ENCODE measurements at regions of chr15 and their contacts with region 1.

Region 1: DNA sequence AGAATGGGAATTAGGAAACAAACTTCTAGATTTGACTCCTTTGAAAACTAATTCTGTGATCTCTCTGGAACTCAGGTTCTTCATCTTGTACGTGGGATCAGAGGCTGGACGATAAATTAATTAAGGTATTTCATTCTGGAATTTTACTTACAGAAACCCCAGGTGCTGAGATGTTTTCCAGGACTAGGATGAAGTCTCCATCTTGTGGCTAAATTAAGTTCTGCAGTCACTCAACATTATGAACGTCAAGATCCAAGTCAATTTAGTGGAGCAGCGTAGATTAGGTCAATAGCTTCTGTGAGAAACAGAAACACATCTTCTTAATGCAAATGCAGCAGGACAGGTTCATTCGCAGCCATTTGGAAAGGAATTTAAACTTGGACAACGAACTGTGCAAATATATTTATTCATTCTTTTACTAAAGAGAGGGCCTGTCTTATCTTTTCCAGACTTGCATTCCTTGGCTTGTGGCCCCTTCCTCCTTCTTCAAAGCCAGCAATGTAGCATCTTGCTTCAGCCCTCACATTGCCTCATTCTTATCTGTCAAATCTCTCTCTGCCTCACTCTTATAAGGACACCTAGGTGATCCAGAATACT is 26.7 kb upstream of the TMC3 start:
- DNase-seq: peak; percentile 43
- CTCF ChIP-seq: peak; percentile 67

Region 2: DNA sequence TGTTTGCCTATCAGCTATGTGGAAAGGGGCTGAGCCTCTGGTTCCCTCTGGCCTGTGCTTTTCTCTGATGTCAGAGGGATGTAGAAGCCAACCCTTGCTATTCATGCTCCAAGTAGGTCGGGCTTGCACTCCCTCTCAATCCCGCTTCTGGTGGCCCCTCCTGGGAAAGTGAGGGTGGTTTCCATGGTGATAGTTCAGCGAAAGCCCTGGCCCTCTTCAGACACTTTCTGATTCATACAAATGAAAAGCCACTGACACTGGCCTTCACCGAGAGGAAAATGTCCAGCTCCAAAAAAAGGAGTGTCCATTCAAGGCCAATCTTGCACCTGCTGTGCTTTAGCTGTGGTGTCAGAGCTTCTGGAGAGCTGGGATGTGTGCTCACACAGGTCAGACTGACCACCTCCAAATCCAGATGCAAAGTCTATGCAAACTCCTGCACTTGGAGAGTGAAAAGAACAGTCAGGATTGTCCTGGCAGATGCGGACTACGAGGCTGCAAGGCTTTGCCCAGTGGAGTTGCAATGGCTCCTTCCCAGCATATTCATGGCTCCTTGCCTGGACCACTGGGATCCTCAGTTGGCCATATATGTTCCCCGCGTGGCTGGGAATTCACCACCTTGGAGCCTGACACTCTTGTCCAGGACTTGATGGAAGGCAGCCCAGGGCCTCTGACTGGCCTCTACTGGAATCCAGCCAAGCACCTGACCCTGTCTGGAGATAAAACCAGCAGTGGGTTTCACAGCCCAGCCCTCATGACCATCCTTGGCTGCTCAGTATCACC is 525.0 kb before region 1 on chr15:
- in situ Hi-C with region 1: no loop called
- DNase-seq: no peak
- CTCF ChIP-seq: no peak

Region 3: DNA sequence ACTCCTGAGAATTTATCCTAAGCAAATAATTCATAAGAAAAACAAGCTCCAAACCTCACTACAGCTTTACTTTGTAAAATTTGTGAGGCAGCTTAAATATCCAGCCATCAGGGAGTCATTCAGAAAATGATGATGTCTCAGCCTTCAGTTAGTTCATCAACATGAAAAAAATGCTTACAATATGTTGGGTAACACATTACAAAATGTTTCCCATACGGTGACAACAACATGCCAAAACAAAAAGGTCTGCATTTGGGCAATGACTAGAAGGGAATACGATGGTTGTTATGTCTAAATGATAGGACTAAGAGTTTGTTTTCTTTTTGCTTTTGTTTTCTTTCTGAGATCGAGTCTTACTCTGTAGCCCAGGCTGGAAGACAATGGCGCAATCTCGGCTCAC is 313.7 kb before region 1 on chr15:
- in situ Hi-C with region 1: no loop called
- DNase-seq: no peak
- CTCF ChIP-seq: no peak

Region 4: GRCh38 chr15:81284256-81285031 is 116.3 kb before region 1 on chr15:
- in situ Hi-C with region 1: loop called (anchors 5 kb)
- DNase-seq: no peak
- CTCF ChIP-seq: no peak

Measured in GM13977 (cell line).